ENCODE measurements at regions of chr20 and their contacts with region 1.

Region 1: GRCh38 chr20:10553326-10553984 is 118.3 kb downstream of the SLX4IP start:
- DNase-seq: peak; percentile 74
- H3K4me3 ChIP-seq: no peak overlapping the region
- H3K27ac ChIP-seq: no peak overlapping the region
- H3K4me1 ChIP-seq: peaks cover 0 to 21% (median 5%) of the 10 kb centered on the region in 4 donors
- H3K27me3 ChIP-seq: no peaks in the 10 kb centered on the region
- CTCF ChIP-seq: peak; percentile 67 to 81 (median 73)
- EP300 ChIP-seq: no peak
- POLR2A ChIP-seq: no peak

Region 2: GRCh38 chr20:10476319-10476724 is 77.1 kb before region 1 on chr20:
- in situ Hi-C with region 1: no loop called
- intact Hi-C with region 1: loop called (anchors 10 kb)
- DNase-seq: no peak
- H3K4me3 ChIP-seq: no peak overlapping the region
- H3K27ac ChIP-seq: no peak overlapping the region
- H3K4me1 ChIP-seq: peaks cover 0 to 11% (median 0%) of the 10 kb centered on the region in 4 donors
- H3K27me3 ChIP-seq: no peaks in the 10 kb centered on the region
- CTCF ChIP-seq: no peak
- EP300 ChIP-seq: no peak
- POLR2A ChIP-seq: no peak

Region 3: GRCh38 chr20:10686356-10687133 is 133.1 kb after region 1 on chr20:
- in situ Hi-C with region 1: no loop called
- intact Hi-C with region 1: no loop called
- DNase-seq: no peak
- H3K4me3 ChIP-seq: no peak overlapping the region
- H3K27ac ChIP-seq: no peak overlapping the region
- H3K4me1 ChIP-seq: peaks cover 0 to 9% (median 0%) of the 10 kb centered on the region in 4 donors
- H3K27me3 ChIP-seq: no peaks in the 10 kb centered on the region
- CTCF ChIP-seq: no peak
- EP300 ChIP-seq: no peak
- POLR2A ChIP-seq: no peak

Region 4: GRCh38 chr20:11140359-11140758 is 586.9 kb after region 1 on chr20:
- in situ Hi-C with region 1: loop called in 1 of 4 experiments (anchors 25 kb)
- intact Hi-C with region 1: no loop called
- DNase-seq: no peak
- H3K4me3 ChIP-seq: no peak overlapping the region
- H3K27ac ChIP-seq: no peak overlapping the region
- H3K4me1 ChIP-seq: no peaks in the 10 kb centered on the region
- H3K27me3 ChIP-seq: no peaks in the 10 kb centered on the region
- CTCF ChIP-seq: no peak
- EP300 ChIP-seq: no peak
- POLR2A ChIP-seq: no peak

Region 5: GRCh38 chr20:11274141-11274594 is 720.7 kb after region 1 on chr20:
- in situ Hi-C with region 1: loop called in 2 of 4 experiments (anchors 10 kb)
- intact Hi-C with region 1: no loop called
- DNase-seq: no peak
- H3K4me3 ChIP-seq: no peak overlapping the region
- H3K27ac ChIP-seq: no peak overlapping the region
- H3K4me1 ChIP-seq: peaks cover 0 to 6% (median 0%) of the 10 kb centered on the region in 4 donors
- H3K27me3 ChIP-seq: no peaks in the 10 kb centered on the region
- CTCF ChIP-seq: peak; percentile 32 to 57 (median 53)
- EP300 ChIP-seq: no peak
- POLR2A ChIP-seq: no peak